ENCODE measurements at regions of chr2 and their contacts with region 1.

Region 1: DNA sequence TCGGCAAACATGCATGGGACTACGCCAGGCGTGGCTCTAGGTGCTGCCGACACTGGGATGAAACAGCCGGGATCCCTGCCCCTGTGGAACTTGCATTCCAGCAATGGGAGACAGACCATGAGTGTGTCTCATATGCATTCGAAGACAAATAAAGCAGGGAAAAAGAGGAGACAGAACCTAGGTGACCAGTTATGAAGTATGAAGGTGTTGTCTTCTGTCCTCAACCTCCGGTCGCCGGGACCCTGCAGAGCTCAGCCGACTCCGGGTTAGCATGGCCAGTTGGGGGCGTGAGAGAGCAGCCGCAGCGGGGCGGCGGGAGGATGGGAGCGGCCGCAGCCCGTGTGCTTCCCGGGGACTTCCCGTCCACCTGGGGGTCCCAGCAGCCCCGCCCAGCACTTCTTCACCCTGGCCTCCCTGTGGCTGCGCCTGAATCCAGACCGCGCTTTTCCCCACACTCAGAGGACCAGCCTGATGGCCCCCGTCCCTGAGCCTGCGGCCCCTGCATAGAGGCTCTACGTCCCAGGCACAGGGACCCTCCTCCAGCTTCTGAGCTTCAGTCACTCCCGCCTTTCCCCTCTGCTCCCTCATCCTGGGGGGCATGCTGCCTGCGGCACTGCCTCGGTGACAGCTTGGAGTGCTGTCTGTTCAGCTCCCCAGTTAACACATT is 11.4 kb downstream of the ID2 start:
- DNase-seq: peak; percentile 41 to 57
- ATAC-seq: peak; percentile 87

Region 2: GRCh38 chr2:7427293-7428060 is 1265.8 kb before region 1 on chr2:
- intact Hi-C with region 1: loop called in 1 of 2 experiments (anchors 10 kb)
- DNase-seq: no peak
- ATAC-seq: peak; percentile 53